AG04449 (cell line): ENCODE measurements at regions of chr12 and their contacts with region 1.

Region 1: DNA sequence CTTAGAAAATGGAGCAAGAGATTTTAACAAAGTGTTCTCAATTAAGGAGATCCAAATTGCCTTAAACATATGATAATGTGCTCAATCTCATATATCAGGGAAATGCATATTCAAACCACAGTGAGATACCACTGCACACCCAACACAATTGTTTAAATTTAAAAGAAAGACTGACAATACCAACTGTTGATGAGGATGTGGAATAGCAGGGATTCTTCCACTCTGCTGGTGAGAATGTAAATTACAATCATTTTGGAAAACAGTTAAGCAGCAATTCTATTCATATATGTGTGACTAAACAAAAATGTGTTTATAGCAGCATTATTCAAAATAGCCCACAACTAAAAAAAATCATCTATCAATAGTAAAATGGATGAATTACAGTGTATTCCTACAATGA is 144.2 kb downstream of the KICS2 start:
- DNase-seq: no peak
- H3K4me3 ChIP-seq: no peak overlapping the region
- CTCF ChIP-seq: peak; percentile 28

Region 2: DNA sequence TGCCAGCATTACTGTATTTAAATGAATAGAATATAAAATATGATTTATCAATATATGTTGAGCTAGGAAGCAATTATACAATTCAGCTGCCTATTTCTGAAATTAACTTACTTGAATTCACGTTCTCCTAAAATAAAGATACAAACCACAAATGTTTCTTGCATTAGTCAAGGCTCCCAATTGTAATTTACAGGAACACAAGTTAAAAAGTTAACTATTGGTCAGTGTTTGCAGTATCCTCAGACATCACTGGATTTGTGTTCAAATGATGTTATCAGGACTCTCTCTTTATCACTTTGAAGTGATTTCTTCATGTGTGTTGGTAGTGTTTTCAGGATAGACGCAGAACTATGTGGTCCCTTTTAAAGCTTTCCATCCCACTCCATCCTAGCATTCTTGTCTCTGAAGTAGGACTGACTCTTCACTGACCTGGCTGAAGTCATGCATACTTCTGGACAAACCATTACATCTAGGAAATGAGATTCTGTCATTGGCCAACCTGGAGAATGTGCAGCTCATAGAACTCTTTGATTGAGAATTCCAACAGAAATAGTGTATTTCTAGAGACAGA is 12.0 kb before region 1 on chr12:
- CTCF ChIA-PET with region 1: interaction called, 21 read pairs
- POLR2A ChIA-PET with region 1: interaction called, 4 read pairs
- DNase-seq: peak; percentile 36
- H3K4me3 ChIP-seq: no peak overlapping the region
- CTCF ChIP-seq: no peak

Region 3: DNA sequence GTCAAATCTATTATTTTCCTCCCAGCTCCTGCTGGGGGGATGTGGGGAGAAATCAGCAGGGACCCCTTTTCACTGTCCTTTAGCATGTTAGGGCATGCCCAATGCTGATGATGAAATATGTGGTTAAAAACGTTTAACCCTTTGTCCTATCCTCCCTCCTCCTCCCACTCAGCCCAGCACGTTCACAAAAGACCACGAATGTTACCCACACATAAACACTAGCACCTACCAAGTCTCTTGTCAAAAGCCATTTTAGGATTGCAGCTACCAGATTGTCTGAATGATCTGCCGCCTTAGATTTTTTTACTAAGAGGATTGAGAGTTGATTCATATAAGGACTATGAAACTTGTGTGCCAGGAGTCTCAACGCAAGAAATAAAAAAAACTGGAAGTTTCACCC is 444.4 kb after region 1 on chr12:
- CTCF ChIA-PET with region 1: no interaction called
- POLR2A ChIA-PET with region 1: no interaction called
- DNase-seq: peak; percentile 9
- H3K4me3 ChIP-seq: no peak overlapping the region
- CTCF ChIP-seq: no peak